ENCODE measurements at regions of chr5 and their contacts with region 1.

Region 1: DNA sequence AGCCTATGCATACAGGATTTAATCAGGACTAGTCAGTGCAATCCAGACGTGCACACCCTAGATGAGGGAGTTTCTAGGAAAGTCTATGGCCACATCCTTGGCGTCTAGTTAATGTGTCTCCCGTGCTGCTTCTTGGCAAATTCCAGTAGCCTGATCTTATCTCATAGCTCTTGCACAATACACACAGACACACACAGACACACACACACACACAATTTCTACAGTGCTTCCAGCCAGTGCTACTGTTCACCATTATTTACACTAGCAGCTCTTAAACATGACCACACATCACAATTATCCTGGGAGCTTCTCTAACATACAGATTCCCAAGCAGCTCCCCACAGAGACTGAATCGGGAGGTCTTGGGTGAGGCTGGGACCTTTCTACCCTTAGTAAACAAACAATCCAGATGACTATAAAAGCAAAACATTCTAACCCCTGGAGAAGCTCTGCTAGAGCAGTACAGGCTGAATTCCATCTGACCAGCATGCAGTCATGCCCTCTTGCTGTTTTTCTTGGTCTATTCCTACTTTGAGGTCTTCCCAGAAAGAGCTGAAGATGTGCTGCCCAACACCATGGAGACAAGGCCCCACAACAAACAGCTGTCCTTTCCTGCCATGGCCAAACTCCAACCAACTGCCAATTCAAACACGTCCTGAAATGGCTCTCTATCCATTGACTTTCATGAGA is 236.6 kb downstream of the DEPDC1B start:
- DNase-seq: no peak
- H3K27ac ChIP-seq: no peak overlapping the region
- CTCF ChIP-seq: no peak

Region 2: DNA sequence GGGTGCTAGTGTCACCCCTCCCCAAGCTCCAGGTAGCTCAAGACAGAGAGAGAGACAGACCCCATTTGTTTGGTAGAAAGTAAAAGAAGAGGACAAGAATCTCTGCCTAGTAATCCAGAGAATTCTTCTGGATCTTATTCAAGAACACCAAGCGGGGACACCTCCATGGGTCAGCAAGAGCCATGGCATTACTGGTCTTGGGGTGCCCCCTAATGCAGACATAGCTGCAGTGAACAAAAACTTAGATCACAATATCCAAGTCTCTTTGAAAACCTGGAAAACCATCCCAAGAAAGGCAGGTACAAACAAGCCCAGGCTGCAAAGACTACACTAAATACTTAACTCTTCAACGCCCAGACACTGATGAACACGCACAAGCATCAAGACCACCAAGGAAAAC is 539.9 kb before region 1 on chr5:
- CTCF ChIA-PET with region 1: interaction called, 12 read pairs
- POLR2A ChIA-PET with region 1: no interaction called
- DNase-seq: no peak
- H3K27ac ChIP-seq: no peak overlapping the region
- CTCF ChIP-seq: no peak

Region 3: GRCh38 chr5:60274747-60275146 is 188.6 kb before region 1 on chr5:
- CTCF ChIA-PET with region 1: no interaction called
- POLR2A ChIA-PET with region 1: no interaction called
- DNase-seq: no peak
- H3K27ac ChIP-seq: no peak overlapping the region
- CTCF ChIP-seq: no peak

Measured in RWPE1 (cell line).